CD14-positive monocyte (primary cell): ENCODE measurements at regions of chr15 and their contacts with region 1.

Region 1: DNA sequence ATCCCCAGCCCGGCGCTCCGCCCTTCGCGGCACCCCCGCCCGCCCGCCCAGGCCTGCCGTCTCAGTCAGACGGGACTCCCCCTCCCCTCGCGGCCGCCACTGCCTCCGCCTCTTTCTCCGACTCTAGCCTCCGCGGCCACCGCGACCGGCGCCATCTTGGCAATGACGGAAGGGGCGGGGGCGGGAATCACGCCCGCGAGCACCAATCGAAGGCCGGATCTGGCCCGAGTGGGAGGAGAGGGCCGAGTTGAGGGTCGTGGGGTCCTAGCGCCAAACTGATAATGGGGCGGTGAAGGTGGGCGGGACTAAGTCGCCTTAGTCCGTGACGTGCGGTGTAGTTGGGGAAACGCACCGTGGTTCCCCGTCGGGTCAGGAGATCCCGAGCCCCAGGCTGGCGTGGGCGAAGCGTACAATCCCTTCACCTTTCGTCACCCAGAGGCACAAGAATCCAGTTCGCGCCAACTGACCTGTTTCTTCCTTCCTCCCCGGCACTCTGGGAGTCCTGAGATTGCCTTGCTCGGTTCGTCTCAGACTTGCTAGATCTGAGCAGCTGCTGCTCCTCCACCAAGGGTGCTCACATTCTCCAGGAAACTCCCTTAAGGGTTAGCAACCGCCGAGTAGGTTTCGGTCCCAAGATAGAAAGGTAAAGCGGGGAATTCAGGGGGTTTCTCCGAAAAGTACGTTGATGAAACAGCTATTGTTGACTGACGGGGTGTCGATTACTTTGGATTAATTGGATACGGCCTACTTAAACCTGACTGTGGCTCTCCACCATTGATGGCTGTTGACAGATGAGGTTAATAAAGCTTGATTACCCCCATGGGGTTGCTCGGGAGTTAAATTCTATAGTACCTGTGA is at the start of gene DENND4A:
- DNase-seq: peak; percentile 99 to 100 (median 99)
- H3K4me3 ChIP-seq: peak within 1 kb of the TSS; percentile 86 to 92 (median 91)
- H3K4me3 Mint-ChIP-seq: peak within 1 kb of the TSS; percentile 92 to 99
- H3K27ac ChIP-seq: peak within 1 kb of the TSS; percentile 99
- H3K27ac Mint-ChIP-seq: peak within 1 kb of the TSS; percentile 98 to 100 (median 100)
- H3K4me1 ChIP-seq: peaks cover 52 to 53% of the 10 kb centered on the region in 2 donors
- H3K4me1 Mint-ChIP-seq: peaks cover 49% of the 10 kb centered on the region
- H3K27me3 ChIP-seq: no peaks in the 10 kb centered on the region
- H3K27me3 Mint-ChIP-seq: no peaks in the 10 kb centered on the region
- CTCF ChIP-seq: no peak
- polyA plus RNA-seq, gene DENND4A: 4.6 to 11.0 (median 6.9) TPM

Region 2: DNA sequence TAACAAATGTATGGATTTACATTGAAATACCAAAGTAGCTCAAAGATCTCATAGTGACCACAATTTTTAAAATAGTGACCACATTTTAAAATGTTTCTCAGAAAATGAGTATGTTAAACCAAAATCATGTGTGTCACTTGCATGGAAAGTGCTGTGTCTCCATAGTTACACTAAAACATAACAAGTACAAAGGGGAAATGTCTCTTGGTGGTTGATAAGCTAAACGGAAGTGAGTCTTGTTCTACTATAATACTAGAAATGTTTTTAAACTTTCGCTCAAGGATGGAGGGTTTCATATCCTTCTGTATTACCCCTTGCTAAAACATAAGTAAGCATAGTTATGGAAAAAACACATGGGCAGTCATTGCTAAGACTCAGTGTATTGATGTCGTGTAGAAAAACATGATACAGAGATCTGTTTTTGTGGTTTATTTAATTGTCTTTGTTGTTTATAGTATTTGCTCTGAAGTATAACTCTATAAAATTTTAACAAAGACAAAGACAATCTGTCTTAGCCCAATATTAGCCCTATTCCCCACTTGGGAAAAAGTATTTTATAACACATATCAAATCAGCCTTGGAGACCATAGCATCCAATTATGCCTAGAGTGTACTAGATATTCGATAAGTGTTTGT is 26.7 kb after region 1 on chr15:
- intact Hi-C with region 1: loop called in 1 of 2 experiments (anchors 2 kb)
- DNase-seq: peak; percentile 87 to 96 (median 93)
- H3K4me3 ChIP-seq: peak overlapping the region in 1 of 3 experiments; percentile 26
- H3K4me3 Mint-ChIP-seq: peak overlapping the region in 1 of 2 donors; percentile 70
- H3K27ac ChIP-seq: peak overlapping the region; percentile 42 to 92
- H3K27ac Mint-ChIP-seq: peak overlapping the region; percentile 93 to 97 (median 95)
- H3K4me1 ChIP-seq: peaks cover 16 to 26% of the 10 kb centered on the region in 2 donors
- H3K4me1 Mint-ChIP-seq: peaks cover 32% of the 10 kb centered on the region
- H3K27me3 ChIP-seq: no peaks in the 10 kb centered on the region
- H3K27me3 Mint-ChIP-seq: peaks cover 0 to 4% (median 0%) of the 10 kb centered on the region in 3 donors
- CTCF ChIP-seq: no peak

Region 3: GRCh38 chr15:65832549-65833364 is 40.4 kb after region 1 on chr15:
- intact Hi-C with region 1: loop called (anchors 5 kb)
- DNase-seq: peak; percentile 70 to 84 (median 83)
- H3K4me3 ChIP-seq: peak overlapping the region in 2 of 3 experiments; percentile 7 to 51
- H3K4me3 Mint-ChIP-seq: peak overlapping the region; percentile 61 to 86
- H3K27ac ChIP-seq: peak overlapping the region; percentile 91 to 95
- H3K27ac Mint-ChIP-seq: peak overlapping the region; percentile 95 to 99 (median 97)
- H3K4me1 ChIP-seq: peaks cover 61 to 67% of the 10 kb centered on the region in 2 donors
- H3K4me1 Mint-ChIP-seq: peaks cover 76% of the 10 kb centered on the region
- H3K27me3 ChIP-seq: no peaks in the 10 kb centered on the region
- H3K27me3 Mint-ChIP-seq: peaks cover 0 to 2% (median 0%) of the 10 kb centered on the region in 3 donors
- CTCF ChIP-seq: no peak